Ovary (tissue), 10 donors: ENCODE measurements at regions of chr15 and their contacts with region 1.

Region 1: DNA sequence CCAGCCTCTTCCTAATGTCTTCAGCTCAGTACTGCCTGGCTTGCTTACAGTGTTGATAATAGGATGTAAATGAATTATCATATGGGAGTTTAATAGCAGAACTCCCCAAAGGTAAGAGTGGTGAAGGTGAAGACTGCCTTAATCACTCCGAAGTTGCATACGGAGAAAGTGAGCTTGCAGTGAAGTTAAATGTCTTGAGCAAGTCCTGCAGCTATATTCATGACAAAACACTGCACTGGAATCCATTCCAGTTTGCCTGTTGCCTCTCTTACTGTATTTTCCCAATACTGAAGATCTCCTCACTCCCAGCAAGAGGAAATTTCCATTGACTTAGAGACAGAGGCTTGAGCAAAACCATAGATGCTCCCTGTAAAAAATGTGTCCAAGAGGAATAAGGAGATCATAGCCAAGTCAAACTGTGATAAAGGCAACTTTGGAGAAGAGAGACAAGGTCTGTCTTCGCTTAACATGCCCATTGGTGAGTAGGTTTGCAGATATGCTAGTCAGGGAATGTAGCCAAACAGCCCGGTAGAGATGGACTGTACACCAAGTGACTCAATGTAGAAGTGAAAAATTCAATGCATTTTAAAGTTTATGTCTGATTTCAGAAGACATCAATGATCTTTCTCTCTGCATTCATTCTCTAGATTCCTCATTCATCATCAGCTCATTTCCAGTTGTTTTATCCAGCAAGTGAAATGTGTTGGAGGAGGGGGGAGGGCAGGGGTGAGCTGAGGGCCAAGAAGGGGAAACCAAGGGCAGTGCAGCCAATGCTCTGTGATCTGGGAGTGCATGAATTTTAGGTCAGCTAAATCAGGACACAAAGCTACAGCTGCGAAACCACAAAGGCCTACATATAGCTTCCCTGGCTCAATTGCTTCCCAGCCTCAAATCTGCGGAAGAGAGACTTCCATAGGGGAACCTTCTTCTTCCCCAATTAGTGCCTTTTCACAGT is 667.1 kb upstream of the NR2F2 start:
- DNase-seq: no peak
- H3K4me3 ChIP-seq: no peak overlapping the region
- H3K27ac ChIP-seq: no peak overlapping the region
- H3K4me1 ChIP-seq: peaks cover 11% of the 10 kb centered on the region
- H3K27me3 ChIP-seq: no peaks in the 10 kb centered on the region
- CTCF ChIP-seq: no peak
- EP300 ChIP-seq: no peak
- POLR2A ChIP-seq: no peak

Region 2: GRCh38 chr15:95341686-95342085 is 321.7 kb before region 1 on chr15:
- intact Hi-C with region 1: loop called in 1 of 4 experiments (anchors 5 kb)
- DNase-seq: no peak
- H3K4me3 ChIP-seq: no peak overlapping the region
- H3K27ac ChIP-seq: no peak overlapping the region
- H3K4me1 ChIP-seq: peaks cover 2% of the 10 kb centered on the region
- H3K27me3 ChIP-seq: no peaks in the 10 kb centered on the region
- CTCF ChIP-seq: no peak
- EP300 ChIP-seq: no peak
- POLR2A ChIP-seq: no peak